Cardiac septum (tissue), 1 donor: ENCODE measurements at regions of chr15 and their contacts with region 1.

Region 1: DNA sequence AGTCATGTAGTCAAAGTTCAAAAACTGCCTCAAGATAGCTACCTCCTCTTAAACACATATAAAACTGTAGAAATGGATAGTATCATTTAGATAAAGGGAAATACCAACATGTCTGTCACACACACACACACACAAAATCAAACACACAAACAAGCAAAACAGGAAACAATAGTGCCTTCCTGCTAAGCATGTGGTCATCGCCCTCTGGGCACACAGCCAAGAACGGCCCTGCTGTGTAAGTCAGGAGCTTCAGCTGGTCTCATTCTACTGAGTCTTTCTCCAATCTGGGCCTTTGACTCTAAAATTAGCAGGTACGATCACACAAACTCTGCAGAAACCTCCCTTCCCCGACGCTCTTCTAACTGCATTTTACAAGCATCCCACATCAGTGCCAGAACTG is 272.2 kb upstream of the CHRNA7 start:
- DNase-seq: no peak

Region 2: GRCh38 chr15:31799715-31800321 is 41.7 kb after region 1 on chr15:
- intact Hi-C with region 1: loop called (anchors 10 kb)
- DNase-seq: no peak

Region 3: DNA sequence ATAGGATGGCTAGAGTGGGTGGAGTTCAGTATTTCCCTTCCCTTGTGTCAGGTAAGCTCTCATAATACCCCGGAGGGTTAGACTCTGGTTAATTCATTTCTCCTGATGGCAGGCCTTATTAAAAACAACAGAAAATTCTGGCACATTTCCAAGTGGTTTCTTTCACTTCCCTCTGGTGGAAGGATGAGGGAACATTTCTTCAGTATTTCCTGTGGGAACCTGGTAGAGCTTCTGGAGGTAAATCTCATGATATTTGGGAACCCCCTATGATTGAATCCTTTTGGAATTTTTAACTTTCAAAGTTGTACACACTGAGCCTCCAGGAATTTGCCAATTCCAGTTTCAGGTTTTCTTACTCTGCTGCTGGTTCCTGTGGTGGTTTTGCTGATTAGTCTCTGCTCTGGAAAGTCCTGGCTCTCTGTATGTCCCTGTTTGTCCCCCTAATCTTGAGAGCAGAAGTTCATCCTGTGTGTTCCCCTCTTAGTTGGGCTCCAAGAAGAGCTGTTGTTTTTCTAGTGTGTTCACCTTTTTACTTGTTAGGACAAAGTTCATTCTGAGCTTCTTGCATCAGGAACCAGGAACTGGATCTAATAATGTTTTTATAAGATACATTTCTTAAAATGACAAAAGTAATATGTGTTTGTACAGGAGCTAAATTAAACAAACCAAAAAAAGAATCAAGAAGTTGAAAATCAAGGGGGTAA is 284.3 kb after region 1 on chr15:
- intact Hi-C with region 1: no loop called
- DNase-seq: no peak